ENCODE measurements at regions of chr15 and their contacts with region 1.

Region 1: GRCh38 chr15:51776952-51777574 is 25.7 kb downstream of the TMOD2 start:
- DNase-seq: peak; percentile 73
- ATAC-seq: peak; percentile 87
- H3K4me3 Mint-ChIP-seq: no peak overlapping the region
- H3K27ac Mint-ChIP-seq: no peak overlapping the region
- H3K4me1 Mint-ChIP-seq: peaks cover 3% of the 10 kb centered on the region
- H3K27me3 Mint-ChIP-seq: no peaks in the 10 kb centered on the region

Region 2: DNA sequence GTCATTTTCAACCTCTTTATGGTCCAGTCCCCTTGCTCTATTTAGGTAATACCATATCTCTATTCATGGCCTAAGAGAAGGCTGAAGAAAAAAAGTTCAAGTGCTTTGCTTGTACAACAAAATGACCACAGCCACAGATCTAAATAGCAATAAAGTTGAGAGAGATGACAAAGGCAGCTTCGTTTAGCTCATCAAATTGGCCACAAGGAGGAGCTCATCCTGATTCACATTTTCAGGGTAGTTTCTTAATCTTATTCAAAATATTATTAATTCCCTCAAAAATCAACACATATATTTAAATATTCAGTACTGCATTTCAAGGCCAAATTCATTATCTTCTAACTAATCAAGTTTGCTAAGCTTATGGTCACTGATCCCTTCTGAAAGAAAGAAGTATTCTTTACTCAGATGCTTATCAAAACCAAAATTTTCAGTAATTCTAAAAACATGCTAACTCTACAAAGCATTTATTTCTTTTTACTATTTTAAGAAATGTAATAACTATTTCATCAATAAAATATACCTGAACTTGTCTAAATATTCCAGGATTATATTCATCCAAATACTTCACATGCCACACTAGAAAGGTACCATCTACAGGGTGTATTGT is 240.0 kb before region 1 on chr15:
- CTCF ChIA-PET with region 1: interaction called, 4 read pairs
- POLR2A ChIA-PET with region 1: no interaction called
- intact Hi-C with region 1: loop called in 1 of 2 experiments (anchors 2 kb)
- DNase-seq: no peak
- ATAC-seq: no peak
- H3K4me3 Mint-ChIP-seq: no peak overlapping the region
- H3K27ac Mint-ChIP-seq: no peak overlapping the region
- H3K4me1 Mint-ChIP-seq: no peaks in the 10 kb centered on the region
- H3K27me3 Mint-ChIP-seq: no peaks in the 10 kb centered on the region

Region 3: GRCh38 chr15:51629612-51630011 is 147.5 kb before region 1 on chr15:
- CTCF ChIA-PET with region 1: interaction called, 13 read pairs
- POLR2A ChIA-PET with region 1: no interaction called
- intact Hi-C with region 1: no loop called
- DNase-seq: no peak
- ATAC-seq: no peak
- H3K4me3 Mint-ChIP-seq: no peak overlapping the region
- H3K27ac Mint-ChIP-seq: no peak overlapping the region
- H3K4me1 Mint-ChIP-seq: peaks cover 1% of the 10 kb centered on the region
- H3K27me3 Mint-ChIP-seq: peaks cover 8% of the 10 kb centered on the region

Region 4: DNA sequence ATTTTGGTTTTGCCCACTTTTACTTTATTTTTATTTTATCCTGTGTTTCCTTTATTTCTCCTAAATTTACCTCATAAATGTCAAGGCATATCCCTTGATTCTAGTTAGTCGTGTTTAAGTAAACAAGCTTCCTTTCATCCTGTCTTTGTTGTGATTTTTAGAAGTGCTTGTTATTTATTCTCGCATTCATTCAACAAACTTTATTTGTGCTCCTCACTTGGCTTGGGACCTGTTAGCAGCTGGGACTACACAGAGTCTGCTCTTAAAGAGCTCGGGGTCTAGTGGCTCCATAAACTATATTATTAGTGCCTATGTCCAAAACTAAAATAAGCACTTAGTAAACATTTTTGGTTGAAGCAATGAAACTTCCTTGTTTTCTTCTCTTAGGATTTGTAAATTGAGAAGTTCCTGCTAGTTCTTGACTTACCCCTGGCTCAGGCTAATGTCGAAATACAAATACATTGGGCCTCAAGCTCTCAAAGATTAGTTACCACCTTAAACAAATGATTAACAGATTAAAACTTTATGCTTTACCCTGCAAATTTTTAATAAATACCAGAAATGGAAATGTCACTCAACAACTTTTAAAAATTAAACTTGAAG is 135.4 kb before region 1 on chr15:
- CTCF ChIA-PET with region 1: interaction called, 285 read pairs
- POLR2A ChIA-PET with region 1: no interaction called
- intact Hi-C with region 1: no loop called
- DNase-seq: no peak
- ATAC-seq: no peak
- H3K4me3 Mint-ChIP-seq: no peak overlapping the region
- H3K27ac Mint-ChIP-seq: no peak overlapping the region
- H3K4me1 Mint-ChIP-seq: no peaks in the 10 kb centered on the region
- H3K27me3 Mint-ChIP-seq: peaks cover 2% of the 10 kb centered on the region

Region 5: GRCh38 chr15:51658670-51659069 is 118.4 kb before region 1 on chr15:
- CTCF ChIA-PET with region 1: interaction called, 22 read pairs
- POLR2A ChIA-PET with region 1: no interaction called
- intact Hi-C with region 1: no loop called
- DNase-seq: no peak
- ATAC-seq: no peak
- H3K4me3 Mint-ChIP-seq: no peak overlapping the region
- H3K27ac Mint-ChIP-seq: no peak overlapping the region
- H3K4me1 Mint-ChIP-seq: no peaks in the 10 kb centered on the region
- H3K27me3 Mint-ChIP-seq: no peaks in the 10 kb centered on the region

Region 6: GRCh38 chr15:51759557-51760070 is 17.4 kb before region 1 on chr15:
- CTCF ChIA-PET with region 1: interaction called, 14 read pairs
- POLR2A ChIA-PET with region 1: no interaction called
- intact Hi-C with region 1: no loop called
- DNase-seq: peak; percentile 28
- ATAC-seq: no peak
- H3K4me3 Mint-ChIP-seq: no peak overlapping the region
- H3K27ac Mint-ChIP-seq: no peak overlapping the region
- H3K4me1 Mint-ChIP-seq: no peaks in the 10 kb centered on the region
- H3K27me3 Mint-ChIP-seq: no peaks in the 10 kb centered on the region